ENCODE measurements at regions of chr2 and their contacts with region 1.

Region 1: GRCh38 chr2:121530212-121530705 is 421 bp upstream of the RNU4ATAC start:
- DNase-seq: peak in 8 of 9 experiments; percentile 72 to 89 (median 86)
- ATAC-seq: peak; percentile 75
- H3K4me3 ChIP-seq: peak overlapping the region; percentile 78 to 97
- H3K4me3 Mint-ChIP-seq: peak overlapping the region; percentile 96
- H3K27ac ChIP-seq: peak overlapping the region; percentile 100
- H3K27ac Mint-ChIP-seq: peak overlapping the region; percentile 100
- H3K4me1 ChIP-seq: peaks cover 17% of the 10 kb centered on the region
- H3K4me1 Mint-ChIP-seq: peaks cover 44% of the 10 kb centered on the region
- H3K27me3 ChIP-seq: no peaks in the 10 kb centered on the region
- H3K27me3 Mint-ChIP-seq: no peaks in the 10 kb centered on the region
- CTCF ChIP-seq: no peak

Region 2: GRCh38 chr2:121400201-121400600 is 130.1 kb before region 1 on chr2:
- CTCF ChIA-PET with region 1: no interaction called
- POLR2A ChIA-PET with region 1: interaction called, 3 read pairs
- intact Hi-C with region 1: loop called (anchors 1 to 5 kb)
- DNase-seq: no peak
- ATAC-seq: no peak
- H3K4me3 ChIP-seq: no peak overlapping the region
- H3K4me3 Mint-ChIP-seq: no peak overlapping the region
- H3K27ac ChIP-seq: no peak overlapping the region
- H3K27ac Mint-ChIP-seq: no peak overlapping the region
- H3K4me1 ChIP-seq: no peaks in the 10 kb centered on the region
- H3K4me1 Mint-ChIP-seq: peaks cover 2% of the 10 kb centered on the region
- H3K27me3 ChIP-seq: no peaks in the 10 kb centered on the region
- H3K27me3 Mint-ChIP-seq: no peaks in the 10 kb centered on the region
- CTCF ChIP-seq: no peak

Region 3: GRCh38 chr2:121446647-121447241 is 83.5 kb before region 1 on chr2:
- CTCF ChIA-PET with region 1: no interaction called
- POLR2A ChIA-PET with region 1: no interaction called
- intact Hi-C with region 1: no loop called
- DNase-seq: no peak
- ATAC-seq: no peak
- H3K4me3 ChIP-seq: no peak overlapping the region
- H3K4me3 Mint-ChIP-seq: no peak overlapping the region
- H3K27ac ChIP-seq: no peak overlapping the region
- H3K27ac Mint-ChIP-seq: no peak overlapping the region
- H3K4me1 ChIP-seq: no peaks in the 10 kb centered on the region
- H3K4me1 Mint-ChIP-seq: no peaks in the 10 kb centered on the region
- H3K27me3 ChIP-seq: no peaks in the 10 kb centered on the region
- H3K27me3 Mint-ChIP-seq: no peaks in the 10 kb centered on the region
- CTCF ChIP-seq: no peak

Region 4: GRCh38 chr2:121596221-121597080 is 66.2 kb after region 1 on chr2:
- CTCF ChIA-PET with region 1: interaction called, 4 read pairs
- POLR2A ChIA-PET with region 1: no interaction called
- intact Hi-C with region 1: loop called in 1 of 2 experiments (anchors 2 kb)
- DNase-seq: peak in 2 of 9 experiments; percentile 18 to 39
- ATAC-seq: peak; percentile 65
- H3K4me3 ChIP-seq: no peak overlapping the region
- H3K4me3 Mint-ChIP-seq: peak overlapping the region; percentile 54
- H3K27ac ChIP-seq: peak overlapping the region in 1 of 2 experiments; percentile 55
- H3K27ac Mint-ChIP-seq: peak overlapping the region; percentile 78
- H3K4me1 ChIP-seq: peaks cover 31% of the 10 kb centered on the region
- H3K4me1 Mint-ChIP-seq: peaks cover 60% of the 10 kb centered on the region
- H3K27me3 ChIP-seq: no peaks in the 10 kb centered on the region
- H3K27me3 Mint-ChIP-seq: no peaks in the 10 kb centered on the region
- CTCF ChIP-seq: no peak

Region 5: GRCh38 chr2:121699421-121700333 is 169.4 kb after region 1 on chr2:
- CTCF ChIA-PET with region 1: no interaction called
- POLR2A ChIA-PET with region 1: interaction called, 19 read pairs
- intact Hi-C with region 1: loop called in 1 of 2 experiments (anchors 1 kb)
- DNase-seq: peak; percentile 68 to 95 (median 83)
- ATAC-seq: peak; percentile 89
- H3K4me3 ChIP-seq: peak overlapping the region; percentile 34 to 36
- H3K4me3 Mint-ChIP-seq: peak overlapping the region; percentile 82
- H3K27ac ChIP-seq: peak overlapping the region; percentile 22 to 83
- H3K27ac Mint-ChIP-seq: peak overlapping the region; percentile 96
- H3K4me1 ChIP-seq: peaks cover 27% of the 10 kb centered on the region
- H3K4me1 Mint-ChIP-seq: peaks cover 31% of the 10 kb centered on the region
- H3K27me3 ChIP-seq: no peaks in the 10 kb centered on the region
- H3K27me3 Mint-ChIP-seq: no peaks in the 10 kb centered on the region
- CTCF ChIP-seq: no peak

Region 6: GRCh38 chr2:121736462-121737341 is 206.4 kb after region 1 on chr2 and contains the start of gene NIFK:
- CTCF ChIA-PET with region 1: interaction called, 12 read pairs
- POLR2A ChIA-PET with region 1: interaction called, 15 read pairs
- intact Hi-C with region 1: loop called (anchors 1 kb)
- DNase-seq: peak; percentile 99 to 100 (median 100)
- ATAC-seq: peak; percentile 90
- H3K4me3 ChIP-seq: peak within 1 kb of the TSS; percentile 78 to 96
- H3K4me3 Mint-ChIP-seq: peak within 1 kb of the TSS; percentile 96
- H3K27ac ChIP-seq: peak within 1 kb of the TSS; percentile 83 to 88
- H3K27ac Mint-ChIP-seq: peak within 1 kb of the TSS; percentile 97
- H3K4me1 ChIP-seq: peaks cover 32% of the 10 kb centered on the region
- H3K4me1 Mint-ChIP-seq: peaks cover 46% of the 10 kb centered on the region
- H3K27me3 ChIP-seq: no peaks in the 10 kb centered on the region
- H3K27me3 Mint-ChIP-seq: no peaks in the 10 kb centered on the region
- CTCF ChIP-seq: no peak
- total RNA-seq, gene NIFK: 43.0 to 49.6 TPM

Region 7: GRCh38 chr2:122340246-122340645 is 810.0 kb after region 1 on chr2:
- CTCF ChIA-PET with region 1: no interaction called
- POLR2A ChIA-PET with region 1: no interaction called
- intact Hi-C with region 1: no loop called
- DNase-seq: no peak
- ATAC-seq: no peak
- H3K4me3 ChIP-seq: no peak overlapping the region
- H3K4me3 Mint-ChIP-seq: no peak overlapping the region
- H3K27ac ChIP-seq: no peak overlapping the region
- H3K27ac Mint-ChIP-seq: no peak overlapping the region
- H3K4me1 ChIP-seq: no peaks in the 10 kb centered on the region
- H3K4me1 Mint-ChIP-seq: no peaks in the 10 kb centered on the region
- H3K27me3 ChIP-seq: no peaks in the 10 kb centered on the region
- H3K27me3 Mint-ChIP-seq: no peaks in the 10 kb centered on the region
- CTCF ChIP-seq: no peak

Measured in CD8-positive, alpha-beta T cell (primary cell).